ENCODE measurements at regions of chr16 and their contacts with region 1.

Region 1: DNA sequence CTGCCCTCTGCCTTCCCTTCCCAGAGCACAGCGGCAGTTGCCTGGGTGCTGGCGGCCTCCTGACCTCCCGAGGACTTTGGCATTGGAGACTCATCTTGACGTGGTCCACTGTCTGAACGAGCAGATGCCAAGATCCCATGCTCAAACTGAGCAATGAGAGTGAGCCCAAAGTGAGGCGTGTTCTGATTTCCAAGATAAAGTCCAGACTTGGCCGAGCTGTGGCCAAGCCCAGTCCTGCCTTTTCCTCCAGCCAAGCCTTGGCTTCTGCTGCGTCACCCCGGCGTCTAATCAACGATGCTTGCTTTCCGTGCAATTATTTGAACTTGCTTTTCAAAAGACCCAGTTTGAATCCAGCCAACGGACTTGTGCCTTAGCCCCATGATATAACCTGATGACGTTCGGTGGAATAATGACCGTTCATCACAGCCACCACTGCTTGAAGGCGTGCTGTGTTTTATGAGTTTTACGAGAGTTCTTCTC is 179.2 kb downstream of the IRF8 start:
- DNase-seq: peak; percentile 95
- H3K4me3 ChIP-seq: no peak overlapping the region
- H3K27ac ChIP-seq: peak overlapping the region in 3 of 4 donors; percentile 81 to 89 (median 86)
- H3K4me1 ChIP-seq: peaks cover 0 to 24% (median 15%) of the 10 kb centered on the region in 4 donors
- H3K27me3 ChIP-seq: no peaks in the 10 kb centered on the region
- CTCF ChIP-seq: no peak
- EP300 ChIP-seq: peak; percentile 92 to 97 (median 95)
- POLR2A ChIP-seq: no peak

Region 2: DNA sequence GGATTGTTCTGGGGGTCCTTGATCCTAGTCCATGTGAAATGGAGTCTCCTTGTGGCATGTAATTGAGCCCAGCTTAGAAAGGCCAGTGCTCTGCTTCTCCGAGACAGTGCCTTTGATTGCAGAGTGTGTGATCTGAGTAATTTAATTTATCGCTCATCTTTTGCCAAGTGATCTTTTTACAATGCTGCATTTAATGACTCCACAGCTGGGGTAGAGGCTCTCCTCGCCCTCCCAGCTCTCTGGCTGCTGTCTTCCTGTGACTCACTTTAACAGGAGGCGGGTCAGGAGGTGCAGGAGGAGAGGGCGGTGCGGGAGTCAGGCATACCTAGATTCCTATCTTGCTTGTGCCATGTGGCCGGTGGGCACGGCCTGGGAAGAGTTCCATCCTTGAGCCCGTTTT is 318.7 kb after region 1 on chr16:
- intact Hi-C with region 1: loop called (anchors 1 kb)
- DNase-seq: peak; percentile 95
- H3K4me3 ChIP-seq: peak overlapping the region in 1 of 4 donors; percentile 12
- H3K27ac ChIP-seq: peak overlapping the region; percentile 88 to 94 (median 91)
- H3K4me1 ChIP-seq: peaks cover 0 to 28% (median 23%) of the 10 kb centered on the region in 4 donors
- H3K27me3 ChIP-seq: no peaks in the 10 kb centered on the region
- CTCF ChIP-seq: no peak
- EP300 ChIP-seq: peak; percentile 52 to 92 (median 73)
- POLR2A ChIP-seq: no peak

Measured in sigmoid colon (tissue), 7 donors.